Mammary epithelial cell (primary cell): ENCODE measurements at regions of chr12 and their contacts with region 1.

Region 1: DNA sequence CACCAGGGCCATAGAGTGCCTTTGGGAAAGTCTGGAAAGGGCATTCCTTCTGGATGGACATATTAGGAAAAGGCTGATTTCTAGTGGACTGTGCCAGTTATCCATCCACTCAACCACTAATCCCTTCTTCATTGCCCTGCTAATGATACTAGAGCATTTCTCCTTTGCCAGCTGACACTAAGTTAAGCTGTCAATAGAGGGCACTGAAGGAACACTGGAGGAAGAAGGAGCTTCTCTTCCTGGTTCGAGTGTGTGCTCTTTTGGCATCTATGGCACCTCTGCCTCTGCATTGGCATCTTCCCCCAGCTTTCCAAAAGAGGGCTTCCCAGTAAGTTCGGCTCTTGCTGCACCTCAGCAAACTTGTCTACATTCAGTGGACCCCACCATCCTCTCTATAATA is 165.4 kb downstream of the DERA start:
- DNase-seq: peak; percentile 38
- H3K4me3 ChIP-seq: no peak overlapping the region
- H3K27ac ChIP-seq: no peak overlapping the region
- H3K4me1 ChIP-seq: no peaks in the 10 kb centered on the region
- H3K27me3 ChIP-seq: no peaks in the 10 kb centered on the region
- CTCF ChIP-seq: peak; percentile 47 to 82

Region 2: DNA sequence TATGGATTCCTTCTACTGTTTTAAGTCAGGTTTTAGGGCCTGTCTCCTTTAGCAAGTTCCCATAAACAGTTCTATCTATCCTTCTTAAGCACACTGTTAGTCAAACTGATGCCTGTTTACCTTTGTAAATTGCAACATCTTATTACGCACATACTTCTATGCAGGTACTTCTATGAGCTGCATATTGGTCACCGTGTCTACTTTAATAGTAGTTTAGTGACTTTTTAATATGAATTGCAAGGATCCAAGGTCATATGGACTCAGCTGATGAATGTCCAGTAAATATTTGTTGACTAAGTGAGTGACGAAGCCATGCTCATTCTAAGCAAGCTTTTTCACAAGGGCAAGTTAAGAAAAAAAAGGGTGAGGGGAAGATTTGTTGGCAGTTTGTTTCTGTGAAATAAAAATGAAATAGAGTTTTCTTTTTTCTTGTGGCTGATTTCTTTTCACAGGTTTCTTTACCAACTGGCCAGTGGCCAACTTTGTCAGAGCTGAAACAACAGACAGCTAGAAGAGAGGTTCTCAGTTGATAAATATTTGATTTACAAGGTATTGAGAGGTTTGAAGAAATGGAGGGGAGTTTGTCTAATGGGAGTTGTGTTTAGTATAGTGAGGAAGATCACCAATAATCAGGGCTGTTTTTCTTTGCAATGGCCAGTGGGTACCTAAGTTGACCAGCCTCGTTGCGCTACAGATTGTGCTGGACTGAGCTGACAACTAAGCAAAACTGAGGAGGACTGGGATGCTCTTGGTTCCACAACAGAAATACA is 59.9 kb after region 1 on chr12:
- CTCF ChIA-PET with region 1: no interaction called
- dilution Hi-C with region 1: loop called (anchors 5 kb)
- in situ Hi-C with region 1: no loop called
- intact Hi-C with region 1: no loop called
- DNase-seq: no peak
- H3K4me3 ChIP-seq: no peak overlapping the region
- H3K27ac ChIP-seq: no peak overlapping the region
- H3K4me1 ChIP-seq: no peaks in the 10 kb centered on the region
- H3K27me3 ChIP-seq: no peaks in the 10 kb centered on the region
- CTCF ChIP-seq: no peak

Region 3: GRCh38 chr12:16359512-16360491 is 283.2 kb after region 1 on chr12:
- CTCF ChIA-PET with region 1: no interaction called
- dilution Hi-C with region 1: no loop called
- in situ Hi-C with region 1: no loop called
- intact Hi-C with region 1: loop called (anchors 2 kb)
- DNase-seq: peak; percentile 25
- H3K4me3 ChIP-seq: no peak overlapping the region
- H3K27ac ChIP-seq: no peak overlapping the region
- H3K4me1 ChIP-seq: no peaks in the 10 kb centered on the region
- H3K27me3 ChIP-seq: no peaks in the 10 kb centered on the region
- CTCF ChIP-seq: peak; percentile 83 to 87

Region 4: GRCh38 chr12:16685107-16685506 is 608.6 kb after region 1 on chr12:
- CTCF ChIA-PET with region 1: no interaction called
- dilution Hi-C with region 1: no loop called
- in situ Hi-C with region 1: no loop called
- intact Hi-C with region 1: loop called (anchors 1 kb)
- DNase-seq: peak; percentile 2
- H3K4me3 ChIP-seq: no peak overlapping the region
- H3K27ac ChIP-seq: no peak overlapping the region
- H3K4me1 ChIP-seq: no peaks in the 10 kb centered on the region
- H3K27me3 ChIP-seq: no peaks in the 10 kb centered on the region
- CTCF ChIP-seq: peak; percentile 29 to 62